Natural killer cell (primary cell): ENCODE measurements at regions of chr11 and their contacts with region 1.

Region 1: DNA sequence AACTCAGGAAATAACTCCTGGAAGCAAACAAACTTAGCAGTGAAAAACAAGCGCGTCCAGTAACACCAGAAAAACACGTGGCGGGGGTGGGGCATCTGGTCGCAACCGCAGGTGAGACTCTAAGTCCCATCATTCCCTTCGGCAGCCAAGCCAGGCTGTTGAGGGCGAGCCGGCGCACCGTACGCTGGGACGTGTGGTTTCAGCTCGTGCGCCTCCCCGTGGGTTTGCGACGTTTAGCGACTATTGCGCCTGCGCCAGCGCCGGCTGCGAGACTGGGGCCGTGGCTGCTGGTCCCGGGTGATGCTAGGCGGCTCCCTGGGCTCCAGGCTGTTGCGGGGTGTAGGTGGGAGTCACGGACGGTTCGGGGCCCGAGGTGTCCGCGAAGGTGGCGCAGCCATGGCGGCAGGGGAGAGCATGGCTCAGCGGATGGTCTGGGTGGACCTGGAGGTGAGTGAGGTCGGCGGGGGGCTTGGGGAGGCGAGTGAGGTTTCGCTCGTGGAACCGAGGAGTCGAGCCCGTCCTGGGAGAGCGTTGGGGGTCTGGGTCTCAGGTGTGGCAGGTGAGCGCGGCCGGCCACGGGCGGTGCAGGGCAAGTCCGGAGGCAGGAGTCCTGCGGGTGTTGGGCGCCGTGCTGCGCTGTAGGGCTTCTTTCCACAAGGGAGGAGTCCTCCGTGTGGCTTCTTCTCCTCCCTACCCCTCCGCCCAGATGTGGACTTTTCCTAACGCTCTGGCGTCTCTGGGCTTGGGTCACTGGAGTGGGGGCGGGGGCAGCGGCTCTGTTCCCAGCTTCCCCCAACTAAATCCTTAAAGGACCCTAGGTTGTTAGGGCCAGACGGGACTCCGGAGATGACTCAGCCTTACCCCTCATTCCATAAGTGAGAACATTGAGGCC is at the start of gene REXO2:
- DNase-seq: peak; percentile 87 to 98
- ATAC-seq: peak; percentile 98 to 99 (median 99)
- H3K4me3 ChIP-seq: peak within 1 kb of the TSS; percentile 73
- H3K4me3 Mint-ChIP-seq: peak within 1 kb of the TSS; percentile 99
- H3K27ac ChIP-seq: peak within 1 kb of the TSS; percentile 32
- H3K27ac Mint-ChIP-seq: peak within 1 kb of the TSS; percentile 90 to 99
- H3K4me1 ChIP-seq: peaks cover 13% of the 10 kb centered on the region
- H3K4me1 Mint-ChIP-seq: peaks cover 27 to 31% of the 10 kb centered on the region in 2 donors
- H3K27me3 ChIP-seq: no peaks in the 10 kb centered on the region
- H3K27me3 Mint-ChIP-seq: no peaks in the 10 kb centered on the region
- CTCF ChIP-seq: no peak
- total RNA-seq, gene REXO2: 21.4 to 32.8 (median 24.7) TPM

Region 2: GRCh38 chr11:114340311-114341131 is 99.0 kb before region 1 on chr11:
- intact Hi-C with region 1: loop called (anchors 2 kb)
- DNase-seq: peak in 1 of 2 donors; percentile 70
- ATAC-seq: peak in 2 of 3 donors; percentile 68 to 83
- H3K4me3 ChIP-seq: no peak overlapping the region
- H3K4me3 Mint-ChIP-seq: peak overlapping the region; percentile 51
- H3K27ac ChIP-seq: no peak overlapping the region
- H3K27ac Mint-ChIP-seq: no peak overlapping the region
- H3K4me1 ChIP-seq: peaks cover 7% of the 10 kb centered on the region
- H3K4me1 Mint-ChIP-seq: peaks cover 5 to 11% of the 10 kb centered on the region in 2 donors
- H3K27me3 ChIP-seq: no peaks in the 10 kb centered on the region
- H3K27me3 Mint-ChIP-seq: peaks cover 21% of the 10 kb centered on the region in 2 donors
- CTCF ChIP-seq: peak; percentile 76

Region 3: DNA sequence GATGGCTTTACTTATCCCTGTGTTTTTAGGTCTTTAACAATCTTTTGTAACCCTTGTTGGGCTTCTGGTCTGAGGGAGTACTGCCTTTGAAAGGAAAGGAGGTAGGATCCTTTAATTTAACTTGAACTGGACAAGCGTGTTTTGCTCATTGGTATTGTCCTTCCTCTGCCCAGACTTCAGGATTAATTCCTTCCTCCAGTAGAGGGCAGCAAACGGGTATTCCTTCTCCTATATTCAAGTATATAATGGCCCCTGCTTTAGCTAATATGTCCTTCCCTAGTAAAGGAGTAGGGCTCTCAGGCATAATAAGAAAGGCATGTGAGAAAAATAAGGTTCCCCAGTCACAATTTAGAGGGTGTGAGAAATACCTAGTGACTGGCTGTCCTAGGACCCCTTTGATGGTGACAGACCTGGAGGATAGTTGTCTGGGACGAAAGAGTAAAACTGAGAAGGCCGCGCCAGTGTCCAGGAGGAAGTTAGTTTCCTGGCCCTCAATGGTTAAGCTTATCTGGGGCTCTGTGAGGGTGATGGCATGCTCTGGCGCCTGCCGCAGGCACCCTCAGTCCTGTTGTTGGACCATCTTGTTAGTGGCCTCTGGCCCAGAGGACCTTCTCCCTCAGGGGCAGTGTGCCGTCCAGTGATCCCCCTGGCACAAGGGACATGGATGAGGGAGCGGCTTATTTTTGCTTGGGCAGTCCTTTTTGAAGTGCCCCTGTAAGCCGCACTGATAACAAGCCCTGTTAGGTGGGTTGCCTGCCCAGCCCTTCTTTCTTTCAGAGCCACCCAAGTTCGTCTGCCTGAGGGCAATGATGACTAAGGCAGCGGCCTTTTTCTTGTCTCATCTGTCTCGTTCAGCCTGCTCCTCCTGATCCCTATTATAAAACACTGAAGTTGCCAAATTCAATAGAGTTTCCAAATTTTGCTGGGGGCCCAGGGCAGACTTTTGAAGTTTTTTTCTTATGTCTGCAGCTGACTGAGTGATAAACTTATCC is 91.0 kb before region 1 on chr11:
- intact Hi-C with region 1: loop called (anchors 2 kb)
- DNase-seq: peak in 1 of 2 donors; percentile 73
- ATAC-seq: peak in 1 of 3 donors; percentile 65
- H3K4me3 ChIP-seq: no peak overlapping the region
- H3K4me3 Mint-ChIP-seq: no peak overlapping the region
- H3K27ac ChIP-seq: no peak overlapping the region
- H3K27ac Mint-ChIP-seq: no peak overlapping the region
- H3K4me1 ChIP-seq: peaks cover 3% of the 10 kb centered on the region
- H3K4me1 Mint-ChIP-seq: peaks cover 6 to 7% of the 10 kb centered on the region in 2 donors
- H3K27me3 ChIP-seq: no peaks in the 10 kb centered on the region
- H3K27me3 Mint-ChIP-seq: no peaks in the 10 kb centered on the region
- CTCF ChIP-seq: peak; percentile 65

Region 4: DNA sequence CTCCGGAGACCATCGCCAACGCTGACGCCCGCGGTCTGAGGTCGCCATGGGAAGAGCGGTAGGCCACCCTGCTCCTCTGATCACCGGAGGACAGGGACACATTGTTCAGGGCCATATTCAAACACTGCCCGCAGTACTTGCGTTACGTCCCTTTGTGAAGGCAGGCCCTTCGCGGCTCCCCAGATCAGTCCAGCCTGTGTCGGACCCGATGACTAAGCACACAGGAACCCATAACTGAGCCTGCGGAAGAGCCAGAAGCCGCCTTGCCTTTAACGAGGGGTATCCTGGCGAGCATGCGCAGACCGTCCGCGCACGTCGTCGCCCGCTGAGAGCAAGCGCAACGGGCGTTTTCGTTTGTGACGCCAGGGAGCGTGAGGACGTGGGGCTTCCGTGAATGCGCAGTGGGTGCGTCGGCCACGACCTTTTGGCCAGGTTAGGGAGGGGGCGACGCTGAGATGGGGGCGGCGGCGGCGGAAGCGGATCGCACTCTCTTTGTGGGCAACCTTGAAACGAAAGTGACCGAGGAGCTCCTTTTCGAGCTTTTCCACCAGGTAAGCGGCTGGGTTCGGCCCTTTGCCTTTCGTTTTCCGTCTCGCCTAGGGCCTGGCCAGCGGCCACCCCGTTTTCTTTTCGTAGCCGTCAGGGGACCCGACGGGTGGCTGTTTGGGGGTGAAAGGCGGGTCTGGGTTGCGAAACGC is 39.1 kb before region 1 on chr11 and contains the starts of genes C11orf71 and RBM7:
- intact Hi-C with region 1: loop called (anchors 1 kb)
- DNase-seq: peak; percentile 97 to 100
- ATAC-seq: peak; percentile 90 to 97 (median 93)
- H3K4me3 ChIP-seq: peak within 1 kb of the TSS; percentile 81
- H3K4me3 Mint-ChIP-seq: peak within 1 kb of the TSS; percentile 96
- H3K27ac ChIP-seq: peak within 1 kb of the TSS; percentile 95
- H3K27ac Mint-ChIP-seq: peak within 1 kb of the TSS; percentile 98 to 99
- H3K4me1 ChIP-seq: peaks cover 7% of the 10 kb centered on the region
- H3K4me1 Mint-ChIP-seq: peaks cover 45 to 48% of the 10 kb centered on the region in 2 donors
- H3K27me3 ChIP-seq: no peaks in the 10 kb centered on the region
- H3K27me3 Mint-ChIP-seq: no peaks in the 10 kb centered on the region
- CTCF ChIP-seq: no peak
- total RNA-seq, gene C11orf71: 11.3 to 13.1 (median 11.5) TPM
- total RNA-seq, gene RBM7: 50.4 to 79.7 (median 58.5) TPM

Region 5: GRCh38 chr11:114472661-114473060 is 33.2 kb after region 1 on chr11:
- intact Hi-C with region 1: no loop called
- DNase-seq: no peak
- ATAC-seq: no peak
- H3K4me3 ChIP-seq: no peak overlapping the region
- H3K4me3 Mint-ChIP-seq: no peak overlapping the region
- H3K27ac ChIP-seq: no peak overlapping the region
- H3K27ac Mint-ChIP-seq: no peak overlapping the region
- H3K4me1 ChIP-seq: no peaks in the 10 kb centered on the region
- H3K4me1 Mint-ChIP-seq: no peaks in the 10 kb centered on the region
- H3K27me3 ChIP-seq: no peaks in the 10 kb centered on the region
- H3K27me3 Mint-ChIP-seq: peaks cover 15 to 18% of the 10 kb centered on the region in 2 donors
- CTCF ChIP-seq: no peak